ENCODE measurements at regions of chr16 and their contacts with region 1.

Region 1: DNA sequence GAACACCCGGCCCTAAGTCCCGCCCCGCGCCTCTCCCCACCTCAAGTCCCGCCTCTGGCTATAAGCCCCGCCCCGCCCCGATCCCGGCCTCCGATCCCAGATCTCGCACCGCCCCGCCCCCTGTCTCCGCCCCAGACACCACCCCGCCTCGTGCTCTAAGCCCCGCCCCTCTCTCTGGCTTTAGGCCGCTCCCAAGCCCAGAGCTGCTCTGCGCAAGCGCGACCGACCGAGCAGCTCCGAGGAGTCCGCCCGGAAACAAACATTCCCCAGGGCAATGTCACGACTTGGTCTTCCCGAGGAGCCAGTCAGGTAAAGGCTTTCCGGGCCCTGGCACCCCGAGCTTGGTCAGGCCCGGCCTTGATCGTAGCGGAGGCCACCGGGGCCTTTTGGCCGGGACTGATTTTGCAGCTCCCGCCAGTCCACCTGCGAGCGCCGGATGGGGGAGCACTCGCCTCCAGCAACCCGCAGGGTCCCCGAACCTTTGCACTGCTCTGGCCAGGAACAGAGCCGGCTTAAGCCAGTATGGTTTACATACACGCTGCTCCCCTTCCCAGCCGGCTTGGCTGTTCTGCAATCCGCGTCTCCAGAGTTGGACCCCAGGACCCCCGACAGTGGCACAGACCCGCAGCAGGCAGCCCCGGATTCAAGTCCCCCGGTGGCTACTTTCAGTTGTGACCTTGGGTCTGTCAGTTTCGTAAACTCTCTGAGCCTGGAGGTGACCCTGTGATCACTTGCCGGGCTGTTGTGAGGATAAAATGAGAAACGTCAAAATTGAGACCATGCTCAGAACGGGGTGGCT is at the start of gene NUDT7:
- DNase-seq: peak; percentile 99 to 100 (median 99)
- ATAC-seq: peak; percentile 99 to 100 (median 99)
- H3K4me3 ChIP-seq: peak within 1 kb of the TSS; percentile 66 to 97 (median 81)
- H3K27ac ChIP-seq: peak within 1 kb of the TSS; percentile 83 to 96 (median 92)
- H3K4me1 ChIP-seq: peaks cover 0 to 16% (median 7%) of the 10 kb centered on the region in 12 donors
- H3K27me3 ChIP-seq: no peaks in the 10 kb centered on the region
- CTCF ChIP-seq: peak in 6 of 12 donors; percentile 30 to 58 (median 46)
- POLR2A ChIP-seq: peak in 1 of 2 donors; percentile 84
- total RNA-seq, gene NUDT7: 16.8 to 86.4 (median 31.0) TPM

Region 2: DNA sequence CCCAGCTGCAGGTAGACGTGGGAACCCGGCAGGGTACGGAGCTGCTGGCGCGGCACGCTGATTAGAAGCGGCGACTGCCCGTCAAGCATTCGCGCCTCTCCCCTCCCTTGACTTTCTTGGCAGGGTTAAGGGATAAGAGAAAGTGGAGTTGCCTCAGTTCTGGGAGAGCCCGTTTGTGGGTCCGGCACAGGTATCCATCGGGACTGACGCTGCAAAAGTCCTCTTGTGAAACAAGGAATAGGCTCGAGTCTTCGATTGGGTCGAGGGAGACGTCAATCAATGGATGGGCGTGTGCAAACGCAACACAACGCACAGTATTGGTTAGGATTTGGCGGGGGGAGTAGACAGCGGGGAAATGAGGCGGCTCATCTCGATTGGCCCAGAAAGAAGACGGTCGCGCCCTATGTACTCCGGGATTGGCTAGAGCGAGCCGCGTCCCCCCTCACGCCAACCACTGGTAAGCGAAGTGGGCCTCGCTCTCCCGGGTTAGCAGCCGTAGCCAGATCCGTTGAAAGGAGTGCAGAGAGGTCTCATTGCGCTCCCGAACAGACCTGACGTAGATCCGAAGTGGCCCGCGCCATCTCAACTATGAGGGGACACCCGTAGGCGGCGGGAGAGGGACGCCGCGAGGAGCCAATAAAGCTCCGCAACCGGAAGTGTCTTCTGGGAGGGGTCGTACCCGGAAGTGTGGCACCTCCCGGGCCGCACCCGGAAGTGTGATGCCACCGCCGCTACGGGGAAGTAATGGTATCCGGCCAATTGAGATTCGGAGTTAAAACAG is 531.8 kb before region 1 on chr16 and contains the start of gene MON1B:
- intact Hi-C with region 1: loop called in 1 of 10 experiments (anchors 5 kb)
- DNase-seq: peak; percentile 97 to 99 (median 98)
- ATAC-seq: peak; percentile 99
- H3K4me3 ChIP-seq: peak within 1 kb of the TSS; percentile 66 to 91 (median 82)
- H3K27ac ChIP-seq: peak within 1 kb of the TSS; percentile 76 to 100 (median 92)
- H3K4me1 ChIP-seq: peaks cover 0 to 23% (median 12%) of the 10 kb centered on the region in 12 donors
- H3K27me3 ChIP-seq: no peaks in the 10 kb centered on the region
- CTCF ChIP-seq: peak in 3 of 12 donors; percentile 20 to 33 (median 21)
- POLR2A ChIP-seq: peak in 1 of 2 donors; percentile 84
- total RNA-seq, gene MON1B: 11.2 to 33.0 (median 17.5) TPM

Region 3: GRCh38 chr16:77856438-77857160 is 134.1 kb after region 1 on chr16:
- intact Hi-C with region 1: loop called in 1 of 10 experiments (anchors 5 kb)
- DNase-seq: no peak
- ATAC-seq: no peak
- H3K4me3 ChIP-seq: no peak overlapping the region
- H3K27ac ChIP-seq: no peak overlapping the region
- H3K4me1 ChIP-seq: peaks cover 0 to 25% (median 7%) of the 10 kb centered on the region in 12 donors
- H3K27me3 ChIP-seq: no peaks in the 10 kb centered on the region
- CTCF ChIP-seq: no peak
- POLR2A ChIP-seq: no peak

Region 4: DNA sequence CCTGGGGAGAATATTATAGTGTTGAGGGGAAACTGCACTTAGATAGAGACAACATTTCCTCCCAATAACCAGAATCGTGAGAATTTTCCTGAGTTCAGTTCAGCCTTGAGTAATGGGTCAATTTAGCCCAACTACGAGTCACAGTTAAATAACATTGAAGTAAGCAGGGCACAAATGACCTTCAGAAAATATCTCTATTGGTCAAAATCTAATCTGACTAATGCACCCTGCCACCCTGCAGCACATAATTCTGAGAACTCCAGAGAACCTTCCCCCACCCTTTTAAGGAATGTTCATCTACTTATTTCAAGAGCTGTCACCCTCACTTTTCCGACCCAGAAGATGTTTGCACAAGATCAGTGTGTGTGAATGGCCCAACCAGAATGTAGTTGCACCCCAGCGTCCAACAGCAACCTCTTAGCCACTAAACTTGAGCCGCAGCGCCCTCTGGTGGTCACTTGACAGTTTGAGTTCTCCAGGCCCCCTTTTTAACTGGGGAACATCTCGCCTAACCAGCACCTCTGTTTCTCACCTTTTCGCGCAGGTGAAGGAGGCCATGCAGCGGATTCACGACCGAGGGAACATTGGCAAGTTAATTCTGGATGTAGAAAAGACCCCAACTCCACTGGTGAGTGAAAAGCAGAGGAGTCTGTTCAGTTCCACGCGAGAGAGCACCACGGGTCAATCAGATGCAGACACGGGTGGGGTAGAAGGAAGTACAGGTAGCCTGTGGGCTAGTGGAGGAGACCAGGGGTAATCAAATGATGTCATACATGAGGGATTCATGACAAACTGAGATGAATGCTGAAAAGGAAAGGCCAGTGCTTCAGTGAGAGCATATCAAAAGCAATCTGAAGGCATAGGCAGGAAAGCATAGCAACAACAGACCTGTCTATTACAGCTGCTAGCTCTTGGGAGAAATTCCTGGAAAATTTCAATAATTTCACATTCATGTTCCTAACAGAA is 249.1 kb after region 1 on chr16:
- intact Hi-C with region 1: loop called in 1 of 10 experiments (anchors 5 kb)
- DNase-seq: peak; percentile 71 to 85 (median 81)
- ATAC-seq: peak in 3 of 4 donors; percentile 87 to 93 (median 88)
- H3K4me3 ChIP-seq: no peak overlapping the region
- H3K27ac ChIP-seq: peak overlapping the region in 1 of 12 donors; percentile 29
- H3K4me1 ChIP-seq: peaks cover 0 to 4% (median 0%) of the 10 kb centered on the region in 12 donors
- H3K27me3 ChIP-seq: peaks cover 0 to 5% (median 0%) of the 10 kb centered on the region in 9 donors
- CTCF ChIP-seq: peak; percentile 58 to 83 (median 78)
- POLR2A ChIP-seq: no peak

Region 5: DNA sequence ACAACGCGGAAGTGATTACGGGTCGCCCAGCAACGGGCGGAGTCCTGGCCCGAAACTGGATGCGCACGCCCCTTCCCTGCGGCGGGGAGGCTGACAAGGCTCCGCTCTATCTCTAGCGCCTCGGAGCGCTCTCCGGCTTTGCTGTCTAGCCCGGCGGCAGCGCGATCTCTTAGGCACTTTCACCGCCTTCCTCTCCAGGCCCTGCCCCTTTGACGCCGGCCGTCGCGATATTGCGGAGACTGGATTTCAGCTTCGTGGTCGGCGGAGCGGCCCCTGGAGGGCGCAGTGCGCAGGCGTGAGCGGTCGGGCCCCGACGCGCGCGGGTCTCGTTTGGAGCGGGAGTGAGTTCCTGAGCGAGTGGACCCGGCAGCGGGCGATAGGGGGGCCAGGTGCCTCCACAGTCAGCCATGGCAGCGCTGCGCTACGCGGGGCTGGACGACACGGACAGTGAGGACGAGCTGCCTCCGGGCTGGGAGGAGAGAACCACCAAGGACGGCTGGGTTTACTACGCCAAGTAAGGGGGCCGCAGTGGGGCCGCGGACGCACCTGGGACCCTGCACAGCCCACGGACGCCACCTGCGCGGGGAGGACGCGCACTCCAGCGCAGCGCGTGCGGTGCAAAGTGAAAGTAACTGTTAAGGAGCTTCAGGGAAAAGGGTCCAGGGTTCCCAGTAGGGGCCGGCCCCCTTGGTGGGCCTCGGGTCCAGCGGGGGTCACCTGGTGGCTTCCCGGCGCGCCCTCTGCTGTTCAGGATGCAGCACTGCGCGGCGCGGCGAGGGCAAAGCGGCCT is 377.1 kb after region 1 on chr16 and contains the start of gene WWOX:
- intact Hi-C with region 1: loop called in 1 of 10 experiments (anchors 2 kb)
- DNase-seq: peak; percentile 95 to 98 (median 97)
- ATAC-seq: peak; percentile 96 to 98 (median 98)
- H3K4me3 ChIP-seq: peak within 1 kb of the TSS; percentile 71 to 100 (median 90)
- H3K27ac ChIP-seq: peak within 1 kb of the TSS; percentile 60 to 94 (median 87)
- H3K4me1 ChIP-seq: peaks cover 0 to 17% (median 8%) of the 10 kb centered on the region in 12 donors
- H3K27me3 ChIP-seq: peaks cover 0 to 5% (median 0%) of the 10 kb centered on the region in 9 donors
- CTCF ChIP-seq: peak; percentile 69 to 90 (median 82)
- POLR2A ChIP-seq: peak in 1 of 2 donors; percentile 81
- total RNA-seq, gene WWOX: 4.3 to 18.3 (median 10.1) TPM

Region 6: DNA sequence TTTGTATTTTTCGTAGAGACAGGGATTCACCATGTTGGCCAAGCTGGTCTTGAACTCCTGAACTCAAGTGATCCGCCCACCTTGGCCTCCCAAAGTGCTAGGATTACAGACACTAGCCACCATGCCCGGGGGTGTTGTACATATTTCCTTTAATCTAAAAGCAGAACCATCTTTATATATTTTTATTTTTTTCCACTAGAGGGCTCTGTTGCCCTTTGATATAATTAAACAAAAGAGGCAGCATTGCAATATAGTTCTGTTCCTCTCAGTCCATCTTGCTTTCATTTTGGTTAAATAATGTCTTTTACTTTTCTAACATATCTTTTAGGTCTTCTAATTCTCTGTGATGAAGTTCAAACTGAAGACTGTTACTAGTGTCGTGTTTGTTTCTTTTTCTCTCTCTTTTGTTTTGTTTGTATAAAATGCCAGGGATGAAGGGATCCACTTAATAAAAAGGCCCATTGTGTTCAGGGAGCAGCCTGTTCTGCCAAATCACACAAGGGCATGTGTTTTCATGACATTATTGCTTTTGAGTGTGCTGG is 400.3 kb after region 1 on chr16:
- intact Hi-C with region 1: no loop called
- DNase-seq: no peak
- ATAC-seq: peak; percentile 67 to 89 (median 68)
- H3K4me3 ChIP-seq: no peak overlapping the region
- H3K27ac ChIP-seq: peak overlapping the region in 6 of 12 donors; percentile 4 to 44 (median 14)
- H3K4me1 ChIP-seq: peaks cover 0 to 20% (median 11%) of the 10 kb centered on the region in 12 donors
- H3K27me3 ChIP-seq: no peaks in the 10 kb centered on the region
- CTCF ChIP-seq: peak; percentile 21 to 72 (median 53)
- POLR2A ChIP-seq: no peak

Measured in heart left ventricle (tissue), 16 donors.